Heart right ventricle (tissue), 16 donors: ENCODE measurements at regions of chr6 and their contacts with region 1.

Region 1: DNA sequence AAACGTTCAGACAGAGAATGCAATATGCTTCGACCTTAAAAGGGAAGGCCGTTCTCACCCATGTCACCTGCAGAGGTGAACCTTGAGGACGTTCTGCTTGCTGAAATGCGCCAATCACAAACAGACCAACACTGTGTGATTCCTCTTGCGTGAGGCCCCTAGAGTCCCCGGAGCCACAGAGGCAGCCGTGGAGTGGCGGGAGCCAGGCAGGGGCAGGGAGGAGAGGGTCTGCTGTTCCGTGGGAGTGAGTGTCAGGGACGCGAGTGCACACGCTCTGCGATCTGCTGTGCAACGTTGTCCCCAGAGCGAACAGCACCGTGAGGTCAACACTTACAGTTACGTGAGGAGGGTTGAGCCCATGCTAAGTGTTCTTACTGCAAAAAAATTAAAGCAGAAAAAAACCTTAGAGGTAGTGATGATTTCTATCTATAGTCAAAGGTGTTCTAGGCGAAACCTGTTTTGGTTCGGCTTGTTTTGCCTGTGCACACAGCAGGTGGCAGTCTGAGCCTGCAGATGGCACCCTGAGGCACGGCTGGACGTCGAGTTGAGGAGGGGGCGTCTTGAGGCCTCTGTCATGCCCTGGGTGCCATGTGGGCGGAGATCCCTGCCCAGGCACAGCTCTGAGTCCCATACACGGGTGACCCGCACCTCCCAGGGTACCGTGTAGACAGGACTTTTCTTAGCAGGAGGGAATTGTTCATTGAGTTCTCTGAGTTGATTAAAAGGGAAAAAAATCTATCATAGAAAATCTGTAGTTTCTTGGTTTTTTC is 71.7 kb upstream of the FRMD1 start:
- DNase-seq: no peak
- ATAC-seq: peak in 5 of 8 donors; percentile 22 to 35 (median 33)
- H3K4me3 ChIP-seq: no peak overlapping the region
- H3K27ac ChIP-seq: no peak overlapping the region
- H3K4me1 ChIP-seq: peaks cover 0 to 4% (median 0%) of the 10 kb centered on the region in 9 donors
- H3K27me3 ChIP-seq: peaks cover 0 to 50% (median 32%) of the 10 kb centered on the region in 7 donors
- CTCF ChIP-seq: peak in 8 of 9 donors; percentile 29 to 62 (median 44)

Region 2: DNA sequence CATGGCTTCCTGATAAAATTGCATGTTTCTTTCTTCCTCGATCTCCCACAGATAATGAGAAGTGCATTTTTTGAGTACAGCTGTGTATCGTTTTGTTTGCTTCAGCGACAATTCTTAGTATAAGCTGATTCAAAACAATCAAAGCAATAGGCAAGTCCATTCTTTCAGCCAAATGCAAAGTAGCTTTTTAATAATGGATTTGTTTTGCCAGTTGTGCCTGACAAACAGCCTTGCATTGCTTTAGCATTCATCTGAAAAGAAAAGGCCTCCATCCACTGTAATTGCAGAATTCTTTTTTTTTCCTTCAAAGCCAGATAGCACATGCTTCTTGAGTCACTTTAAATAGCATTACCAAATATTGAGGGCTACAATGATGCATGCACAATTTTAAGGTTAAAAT is 793.9 kb before region 1 on chr6:
- intact Hi-C with region 1: no loop called
- DNase-seq: no peak
- ATAC-seq: no peak
- H3K4me3 ChIP-seq: no peak overlapping the region
- H3K27ac ChIP-seq: no peak overlapping the region
- H3K4me1 ChIP-seq: peaks cover 0 to 1% (median 0%) of the 10 kb centered on the region in 9 donors
- H3K27me3 ChIP-seq: peaks cover 0 to 35% (median 26%) of the 10 kb centered on the region in 7 donors
- CTCF ChIP-seq: no peak

Region 3: DNA sequence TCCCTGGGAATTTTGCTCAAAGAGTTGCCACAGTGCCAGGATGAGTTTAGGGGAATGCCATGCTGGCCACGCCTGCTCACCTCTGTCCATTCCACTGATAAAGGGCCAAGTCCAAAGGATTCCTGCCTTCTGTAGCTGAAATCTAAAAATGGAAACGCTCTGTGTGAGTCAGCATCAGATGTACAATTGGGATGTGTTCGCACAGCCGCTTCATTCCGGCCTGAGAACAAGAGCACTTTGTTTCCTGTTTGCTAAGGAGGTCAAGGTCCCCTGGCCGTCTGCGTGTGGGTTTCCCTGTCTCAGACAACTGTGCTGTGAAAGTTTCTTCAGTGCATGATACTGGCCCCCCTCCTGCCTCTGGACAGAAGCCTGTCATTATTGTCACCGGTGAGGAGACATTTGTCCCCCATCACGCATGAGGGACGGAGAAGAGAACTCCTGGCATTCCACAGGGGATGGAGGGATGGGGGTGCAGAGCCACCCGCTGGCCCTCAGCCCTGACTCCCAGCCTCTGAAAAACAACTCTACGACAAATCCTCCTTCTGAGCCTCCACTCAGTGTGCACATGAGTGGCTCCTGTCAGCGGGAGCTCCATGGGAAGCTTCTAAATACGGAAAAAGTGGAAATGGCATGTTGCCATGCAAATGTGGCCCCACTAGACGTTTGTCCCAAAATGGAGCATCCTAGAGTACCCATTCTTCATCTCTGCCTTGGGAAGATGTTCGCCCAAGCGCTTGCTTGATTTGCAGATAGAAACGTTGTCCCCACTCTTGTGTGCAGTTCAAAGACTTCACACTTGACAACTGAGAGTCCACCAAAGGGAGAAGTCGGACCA is 467.5 kb before region 1 on chr6:
- intact Hi-C with region 1: no loop called
- DNase-seq: peak; percentile 42 to 81
- ATAC-seq: peak; percentile 79 to 92 (median 90)
- H3K4me3 ChIP-seq: no peak overlapping the region
- H3K27ac ChIP-seq: peak overlapping the region; percentile 63 to 88 (median 77)
- H3K4me1 ChIP-seq: peaks cover 16 to 63% (median 44%) of the 10 kb centered on the region in 9 donors
- H3K27me3 ChIP-seq: peaks cover 0 to 18% (median 0%) of the 10 kb centered on the region in 7 donors
- CTCF ChIP-seq: no peak

Region 4: DNA sequence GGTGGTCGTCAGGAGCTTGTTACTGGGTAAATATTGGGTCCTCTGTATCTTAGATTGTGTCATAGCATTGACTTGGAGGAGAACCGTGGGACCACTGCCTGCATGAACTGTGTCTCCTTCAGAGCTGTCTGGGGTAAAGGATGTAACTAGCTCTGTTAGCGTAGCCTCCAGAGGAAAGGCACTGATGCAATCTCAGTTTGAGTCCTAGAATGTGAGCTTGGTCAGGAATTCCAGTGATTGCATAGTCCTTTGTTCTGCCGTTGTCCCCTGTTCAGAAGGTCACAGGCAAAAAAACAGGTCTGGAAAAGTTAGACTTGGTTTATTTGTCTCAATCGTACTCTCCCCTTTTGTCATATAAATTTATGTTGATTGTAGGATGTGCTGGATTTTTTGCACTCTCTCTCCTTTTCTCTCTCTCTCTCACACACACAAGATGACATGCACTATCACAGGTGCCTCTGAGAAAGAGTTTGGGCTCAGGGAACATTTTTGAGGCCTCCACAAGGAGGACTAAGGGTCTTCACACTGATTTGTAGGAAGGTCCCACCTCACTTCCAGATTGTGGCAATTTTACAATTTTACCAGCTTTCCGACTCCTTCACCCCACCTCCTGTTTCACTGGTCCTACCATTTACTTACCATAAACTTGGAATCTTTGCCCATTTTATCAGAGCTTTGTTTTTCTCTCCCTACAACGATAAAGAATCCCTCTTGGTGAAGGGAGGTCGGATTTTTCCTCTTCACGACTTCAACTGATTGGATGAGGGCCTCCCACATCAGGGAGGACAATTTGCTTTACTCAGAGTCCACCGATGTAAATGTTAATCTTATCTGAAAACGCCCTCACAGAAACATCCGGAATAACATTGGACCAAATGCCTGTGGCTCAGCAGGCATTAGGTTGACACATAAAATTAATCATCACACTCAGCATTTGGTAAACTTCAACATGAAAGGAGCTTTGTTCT is 175.8 kb after region 1 on chr6:
- intact Hi-C with region 1: loop called in 1 of 10 experiments (anchors 10 kb)
- DNase-seq: no peak
- ATAC-seq: peak in 7 of 8 donors; percentile 41 to 91 (median 73)
- H3K4me3 ChIP-seq: no peak overlapping the region
- H3K27ac ChIP-seq: peak overlapping the region in 7 of 10 donors; percentile 7 to 67 (median 35)
- H3K4me1 ChIP-seq: no peaks in the 10 kb centered on the region
- H3K27me3 ChIP-seq: peaks cover 0 to 71% (median 51%) of the 10 kb centered on the region in 7 donors
- CTCF ChIP-seq: no peak

Region 5: GRCh38 chr6:168342641-168343040 is 191.9 kb after region 1 on chr6:
- intact Hi-C with region 1: loop called in 1 of 10 experiments (anchors 10 kb)
- DNase-seq: no peak
- ATAC-seq: no peak
- H3K4me3 ChIP-seq: no peak overlapping the region
- H3K27ac ChIP-seq: no peak overlapping the region
- H3K4me1 ChIP-seq: no peaks in the 10 kb centered on the region
- H3K27me3 ChIP-seq: peaks cover 0 to 54% (median 37%) of the 10 kb centered on the region in 7 donors
- CTCF ChIP-seq: no peak

Region 6: DNA sequence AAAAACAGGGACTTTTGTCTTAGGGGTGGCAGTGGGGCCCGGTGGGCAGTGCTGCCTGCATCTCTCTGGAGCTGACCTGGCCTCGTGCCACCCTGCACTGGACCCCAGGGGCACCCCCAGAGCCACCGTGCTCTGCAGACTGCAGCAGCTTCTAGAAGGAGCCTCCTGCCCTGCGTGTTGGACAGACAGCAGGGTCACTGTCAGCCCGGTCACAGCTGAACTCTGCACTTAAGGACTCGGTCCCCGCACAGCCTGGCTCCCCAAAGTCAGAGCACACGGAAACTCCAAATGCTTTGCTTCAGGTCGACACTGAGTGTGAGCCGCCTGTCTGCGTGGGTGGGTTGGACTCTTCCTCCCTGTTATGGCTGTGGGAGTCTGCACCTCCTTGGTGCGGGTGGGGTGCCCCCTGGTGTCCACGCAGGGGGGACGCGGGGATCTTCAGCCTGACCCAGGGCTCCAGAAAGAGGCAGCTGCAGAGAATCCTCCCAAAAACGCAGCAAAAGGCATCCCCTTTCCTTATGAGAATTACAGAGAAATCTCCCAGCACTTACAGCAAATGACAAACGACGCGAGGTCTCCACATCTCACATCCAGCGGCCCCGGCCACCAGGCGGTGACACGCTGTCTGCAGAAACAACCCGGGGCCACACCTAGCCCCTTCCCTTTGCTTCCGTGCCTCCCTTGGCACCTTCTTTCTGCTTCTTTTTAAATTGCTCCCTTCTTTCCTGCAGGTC is 205.1 kb after region 1 on chr6:
- intact Hi-C with region 1: loop called in 7 of 10 experiments (anchors 5 to 10 kb)
- DNase-seq: peak; percentile 46 to 57
- ATAC-seq: peak; percentile 71 to 96 (median 89)
- H3K4me3 ChIP-seq: no peak overlapping the region
- H3K27ac ChIP-seq: no peak overlapping the region
- H3K4me1 ChIP-seq: peaks cover 0 to 8% (median 0%) of the 10 kb centered on the region in 9 donors
- H3K27me3 ChIP-seq: peaks cover 0 to 28% (median 0%) of the 10 kb centered on the region in 7 donors
- CTCF ChIP-seq: peak; percentile 39 to 79 (median 74)